Posterior vena cava (tissue), 2 donors: ENCODE measurements at regions of chr12 and their contacts with region 1.

Region 1: GRCh38 chr12:13144266-13144828 is 40.9 kb upstream of the GSG1 start:
- DNase-seq: no peak

Region 2: DNA sequence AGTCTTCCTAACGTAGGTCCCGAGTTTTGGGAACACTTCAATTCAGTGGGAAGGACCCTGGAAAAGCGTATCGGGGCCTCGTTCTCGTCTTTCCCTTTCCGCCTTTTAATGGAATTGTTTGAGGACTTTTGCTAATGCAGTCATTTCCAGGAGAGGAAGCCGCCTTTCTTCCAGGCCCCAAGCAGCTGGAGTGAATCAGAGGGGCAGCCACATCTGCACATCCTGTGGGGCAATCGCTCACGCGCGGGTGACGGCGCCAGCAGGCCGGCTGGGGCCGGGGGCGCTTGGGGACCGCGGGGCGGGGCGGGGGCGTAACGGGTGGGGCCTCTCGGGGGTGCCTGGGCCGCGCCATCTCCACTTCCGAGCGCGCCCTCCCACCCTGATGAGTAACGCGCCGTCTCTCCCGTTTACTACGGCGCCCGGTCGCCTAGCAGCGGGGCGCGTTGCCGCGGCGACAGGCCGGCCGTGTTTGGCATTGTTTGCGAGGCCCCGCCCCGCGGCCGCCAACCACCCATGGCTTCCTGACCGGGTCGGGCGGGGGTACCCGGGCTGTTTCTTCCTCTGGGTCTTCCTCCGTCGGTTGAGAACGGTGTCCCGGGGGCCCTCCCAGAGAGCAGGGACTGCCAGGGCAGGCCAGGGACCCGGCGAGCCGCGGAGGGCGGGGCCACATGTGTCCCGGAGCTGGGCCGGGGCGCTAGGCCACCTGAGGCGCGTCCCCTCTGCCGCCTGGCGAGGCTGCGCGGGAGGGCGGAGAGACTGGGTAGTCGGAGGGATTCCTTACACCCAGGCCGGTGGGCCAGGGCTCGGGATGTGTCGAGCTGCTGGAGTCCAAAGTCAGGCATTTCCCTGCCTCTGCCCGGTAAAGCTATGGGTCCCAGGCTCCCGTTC is 43.2 kb before region 1 on chr12:
- intact Hi-C with region 1: no loop called
- DNase-seq: peak; percentile 98

Region 3: GRCh38 chr12:13964666-13965065 is 820.3 kb after region 1 on chr12:
- intact Hi-C with region 1: loop called in 1 of 2 experiments (anchors 5 kb)
- DNase-seq: no peak